ENCODE measurements at regions of chr7 and their contacts with region 1.

Region 1: DNA sequence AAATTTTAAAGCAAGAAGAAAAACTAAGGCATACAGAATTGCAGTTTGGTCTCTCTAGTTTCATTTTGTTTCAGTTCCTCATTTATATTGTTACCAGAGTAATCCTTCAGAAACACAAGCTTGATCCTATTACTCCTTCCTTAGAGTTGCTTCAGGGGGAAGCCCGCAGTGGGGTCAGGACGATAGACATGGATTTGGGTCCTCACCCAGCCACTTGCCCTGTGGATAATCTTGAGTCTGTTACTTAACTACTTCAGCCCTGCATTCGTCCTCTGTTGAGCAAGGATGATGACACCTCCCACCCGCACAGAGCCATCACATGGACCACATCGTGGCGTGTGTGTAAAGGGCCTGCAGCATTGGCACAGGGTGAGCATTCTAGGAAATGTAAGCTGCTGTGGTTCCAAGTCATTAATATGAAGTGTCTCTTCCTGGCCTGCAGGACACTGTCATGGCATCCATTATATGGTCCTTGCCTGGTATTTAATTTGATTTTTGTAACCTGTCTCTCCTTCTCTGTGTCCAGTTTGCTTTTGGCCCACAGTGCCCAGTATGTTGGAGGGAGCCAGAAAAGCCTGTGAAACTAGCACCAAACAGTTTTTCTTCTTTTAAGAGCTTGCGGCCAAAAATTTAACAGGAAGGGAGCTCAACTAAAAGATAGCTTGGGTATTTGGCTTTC is 111.2 kb downstream of the EEPD1 start:
- DNase-seq: no peak
- ATAC-seq: no peak
- H3K4me3 ChIP-seq: no peak overlapping the region
- H3K27ac ChIP-seq: no peak overlapping the region
- H3K4me1 ChIP-seq: peaks cover 31% of the 10 kb centered on the region
- H3K27me3 ChIP-seq: no peaks in the 10 kb centered on the region
- CTCF ChIP-seq: no peak

Region 2: DNA sequence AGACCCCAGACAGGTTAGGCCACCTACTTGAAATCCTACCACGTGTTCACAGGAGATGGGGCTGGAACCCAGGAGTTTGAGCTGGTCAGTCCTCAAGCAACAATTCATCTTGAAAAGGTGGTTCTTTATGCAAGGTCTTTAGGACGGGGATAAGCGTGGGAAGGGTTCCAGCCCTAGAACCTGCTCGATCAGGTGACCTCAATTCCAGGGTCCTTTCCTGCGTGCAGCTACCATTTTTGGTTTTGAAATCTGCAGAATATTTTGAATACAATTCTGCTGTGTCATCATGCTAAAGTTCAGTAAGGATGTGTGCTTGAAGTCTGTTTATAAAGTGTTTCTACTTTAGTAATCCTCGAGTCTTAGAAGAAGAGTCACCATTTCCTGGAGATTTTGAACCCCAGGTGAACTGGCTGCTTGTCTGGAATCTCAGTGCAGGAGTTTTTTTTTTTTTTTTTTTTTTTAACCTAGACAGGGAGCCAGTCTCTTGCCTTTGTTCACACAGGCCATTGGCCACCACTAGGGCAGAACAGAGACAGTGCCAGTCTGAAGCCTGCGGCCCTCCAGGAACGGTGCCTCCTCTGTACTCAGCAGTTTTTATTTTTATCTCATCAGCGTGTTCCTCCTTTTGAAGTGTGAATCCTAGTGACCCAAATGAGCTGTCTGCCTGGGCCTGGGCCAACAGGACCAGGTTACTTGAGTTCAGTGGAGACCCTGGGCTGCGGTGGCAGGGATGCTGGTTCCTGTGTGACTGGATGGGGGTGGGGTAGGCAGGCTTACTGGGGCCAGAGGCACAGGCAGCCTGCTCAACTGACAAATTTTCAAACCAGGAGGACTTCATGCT is 56.6 kb before region 1 on chr7:
- CTCF ChIA-PET with region 1: no interaction called
- POLR2A ChIA-PET with region 1: no interaction called
- intact Hi-C with region 1: loop called (anchors 5 kb)
- DNase-seq: peak; percentile 70
- ATAC-seq: peak; percentile 16; the same call in 1 of the 2 replicates
- H3K4me3 ChIP-seq: no peak overlapping the region
- H3K27ac ChIP-seq: peak overlapping the region; percentile 60
- H3K4me1 ChIP-seq: peaks cover 41% of the 10 kb centered on the region
- H3K27me3 ChIP-seq: no peaks in the 10 kb centered on the region
- CTCF ChIP-seq: no peak

Region 3: GRCh38 chr7:36224934-36225858 is 39.1 kb before region 1 on chr7:
- CTCF ChIA-PET with region 1: no interaction called
- POLR2A ChIA-PET with region 1: no interaction called
- intact Hi-C with region 1: no loop called
- DNase-seq: no peak
- ATAC-seq: no peak
- H3K4me3 ChIP-seq: no peak overlapping the region
- H3K27ac ChIP-seq: no peak overlapping the region
- H3K4me1 ChIP-seq: no peaks in the 10 kb centered on the region
- H3K27me3 ChIP-seq: no peaks in the 10 kb centered on the region
- CTCF ChIP-seq: no peak

Region 4: DNA sequence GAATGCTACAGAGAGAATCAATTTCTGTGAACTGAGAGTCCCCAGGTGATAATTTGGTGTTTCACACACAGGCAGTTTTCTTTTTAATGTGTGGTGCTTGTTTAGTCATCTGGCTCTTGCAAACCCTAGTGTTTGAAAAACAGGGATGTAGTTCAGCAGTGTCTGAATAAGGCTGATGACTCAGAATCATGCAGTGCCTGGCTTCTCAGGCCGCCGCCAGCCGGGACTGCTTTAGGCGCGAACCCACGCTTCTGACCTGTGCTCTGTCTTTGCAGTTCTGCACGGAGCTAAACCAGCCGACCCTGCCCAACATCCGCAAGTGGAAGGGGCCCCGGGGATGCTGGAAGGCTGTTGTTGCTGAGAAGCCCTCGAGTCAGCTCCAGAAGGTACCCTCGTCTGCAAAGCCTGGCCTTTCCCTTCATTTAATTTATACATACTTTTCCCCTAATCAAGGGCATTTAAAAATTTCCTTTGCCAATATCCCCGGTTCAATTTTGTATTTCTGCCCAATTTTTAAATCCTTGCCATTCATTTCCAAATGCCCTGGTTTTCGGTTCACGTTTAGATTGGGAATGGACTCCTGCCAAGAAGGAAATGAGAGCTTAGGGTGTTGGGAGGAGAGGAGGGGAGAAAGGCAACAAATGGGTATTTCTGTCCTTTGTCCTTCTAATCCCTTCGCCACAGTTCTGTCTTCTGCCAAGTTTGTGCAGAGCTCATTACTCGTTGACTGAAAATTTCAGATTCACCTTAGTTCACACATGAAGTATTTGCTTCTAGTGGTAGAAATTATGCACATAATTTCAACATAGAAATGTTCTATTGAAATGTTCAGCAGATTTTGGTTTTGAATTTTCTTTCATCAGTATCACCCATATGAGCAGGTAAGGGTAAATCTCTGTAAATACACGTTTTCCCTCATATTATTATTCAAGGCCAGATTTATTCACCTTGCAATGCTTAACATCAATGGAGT is 16.9 kb after region 1 on chr7:
- CTCF ChIA-PET with region 1: no interaction called
- POLR2A ChIA-PET with region 1: no interaction called
- intact Hi-C with region 1: loop called (anchors 2 kb)
- DNase-seq: peak; percentile 86
- ATAC-seq: peak; percentile 87
- H3K4me3 ChIP-seq: peak overlapping the region; percentile 56
- H3K27ac ChIP-seq: peak overlapping the region; percentile 90
- H3K4me1 ChIP-seq: peaks cover 57% of the 10 kb centered on the region
- H3K27me3 ChIP-seq: no peaks in the 10 kb centered on the region
- CTCF ChIP-seq: no peak

Measured in PC-3 (cell line).